ENCODE measurements at regions of chr4 and their contacts with region 1.

Region 1: GRCh38 chr4:22473268-22473667 is 42.6 kb downstream of the ADGRA3 start:
- DNase-seq: no peak
- H3K4me3 Mint-ChIP-seq: no peak overlapping the region
- H3K27ac Mint-ChIP-seq: no peak overlapping the region
- H3K4me1 Mint-ChIP-seq: peaks cover 34% of the 10 kb centered on the region
- H3K27me3 Mint-ChIP-seq: no peaks in the 10 kb centered on the region
- CTCF ChIP-seq: no peak

Region 2: GRCh38 chr4:22515145-22515887 is 42.0 kb after region 1 on chr4:
- CTCF ChIA-PET with region 1: no interaction called
- intact Hi-C with region 1: loop called (anchors 5 kb)
- DNase-seq: peak; percentile 70
- H3K4me3 Mint-ChIP-seq: peak overlapping the region; percentile 97
- H3K27ac Mint-ChIP-seq: peak overlapping the region; percentile 89
- H3K4me1 Mint-ChIP-seq: peaks cover 26% of the 10 kb centered on the region
- H3K27me3 Mint-ChIP-seq: no peaks in the 10 kb centered on the region
- CTCF ChIP-seq: no peak